ENCODE measurements at regions of chr4 and their contacts with region 1.

Region 1: DNA sequence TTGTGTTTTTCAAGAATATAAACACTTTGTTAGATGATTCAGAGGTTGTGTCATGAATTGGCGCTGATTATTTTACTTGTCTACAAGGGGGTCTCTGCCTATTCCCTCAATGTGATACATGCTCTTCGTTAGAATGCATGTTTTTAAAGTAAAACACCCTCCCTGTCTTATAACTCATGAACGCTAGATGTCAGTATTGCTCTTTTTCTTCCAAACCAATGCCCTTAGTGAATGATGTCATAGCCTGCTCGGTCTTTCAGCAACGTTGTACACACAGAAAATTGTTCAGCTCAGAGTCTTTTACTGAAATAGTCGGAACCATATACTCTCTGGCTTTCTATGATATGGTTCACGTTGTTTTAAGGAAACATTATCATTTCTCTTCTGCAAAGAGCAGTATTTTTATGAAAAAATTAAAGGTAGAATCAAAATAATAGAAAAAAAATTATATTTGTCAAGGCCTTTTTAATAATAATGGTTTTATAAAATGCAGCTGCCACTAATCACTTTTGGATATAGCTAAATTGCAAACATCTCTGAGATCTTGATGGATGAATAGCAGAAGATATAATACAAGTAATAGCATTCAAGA is 292.9 kb downstream of the TLL1 start:
- DNase-seq: peak; percentile 16
- H3K4me3 Mint-ChIP-seq: no peak overlapping the region
- H3K27ac Mint-ChIP-seq: no peak overlapping the region
- H3K4me1 Mint-ChIP-seq: no peaks in the 10 kb centered on the region
- H3K27me3 Mint-ChIP-seq: no peaks in the 10 kb centered on the region
- CTCF ChIP-seq: peak; percentile 16

Region 2: DNA sequence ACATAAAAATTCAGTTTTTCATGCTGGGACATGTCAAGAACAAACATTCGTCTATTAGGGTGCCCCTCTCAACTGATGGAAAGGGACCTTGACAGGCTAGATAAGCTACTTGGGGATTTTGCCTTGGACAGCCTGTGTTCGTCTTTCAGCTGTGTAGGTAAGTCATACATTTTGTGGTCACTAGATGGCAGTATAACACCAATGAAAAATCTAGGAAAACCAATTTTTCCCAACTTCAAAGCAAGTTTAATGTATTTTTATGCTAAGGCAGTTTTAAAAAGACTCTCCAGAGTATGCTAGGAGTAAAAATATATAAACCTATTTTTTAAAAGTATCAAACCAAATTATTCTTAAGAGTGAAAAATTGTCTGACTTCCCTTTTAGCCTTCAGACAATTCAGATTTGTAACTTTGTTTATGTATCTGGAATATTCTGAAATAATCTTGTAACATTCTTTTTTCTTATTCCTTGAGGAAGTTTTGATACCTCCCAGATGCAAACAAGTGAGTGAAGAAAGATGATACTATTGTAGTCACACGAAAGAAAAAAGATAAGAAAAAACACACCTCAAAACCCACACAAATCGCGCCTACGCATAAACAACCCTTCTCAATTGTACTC is 628.8 kb before region 1 on chr4:
- CTCF ChIA-PET with region 1: no interaction called
- intact Hi-C with region 1: loop called (anchors 10 kb)
- DNase-seq: peak; percentile 14
- H3K4me3 Mint-ChIP-seq: no peak overlapping the region
- H3K27ac Mint-ChIP-seq: no peak overlapping the region
- H3K4me1 Mint-ChIP-seq: no peaks in the 10 kb centered on the region
- H3K27me3 Mint-ChIP-seq: no peaks in the 10 kb centered on the region
- CTCF ChIP-seq: peak; percentile 42

Region 3: DNA sequence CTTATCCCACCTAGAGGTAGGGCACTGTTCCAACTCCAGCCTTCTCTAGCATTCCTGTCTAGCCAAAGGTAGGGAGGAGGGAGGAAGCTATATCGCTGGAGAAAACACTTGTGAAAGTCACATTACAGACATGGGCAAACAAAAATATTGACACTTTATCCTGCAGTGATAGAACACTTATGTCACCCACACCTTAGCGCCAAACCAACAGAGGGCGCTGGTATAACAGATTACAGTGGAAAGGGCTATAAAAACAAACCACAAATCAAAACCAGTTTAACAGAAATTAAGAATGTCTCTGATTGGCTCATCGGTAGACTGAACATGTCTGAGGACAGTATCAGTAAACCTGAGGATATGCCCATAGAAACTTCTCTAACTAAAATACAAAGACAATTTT is 158.4 kb after region 1 on chr4:
- CTCF ChIA-PET with region 1: no interaction called
- intact Hi-C with region 1: loop called (anchors 5 kb)
- DNase-seq: peak; percentile 50
- H3K4me3 Mint-ChIP-seq: no peak overlapping the region
- H3K27ac Mint-ChIP-seq: no peak overlapping the region
- H3K4me1 Mint-ChIP-seq: peaks cover 3% of the 10 kb centered on the region
- H3K27me3 Mint-ChIP-seq: no peaks in the 10 kb centered on the region
- CTCF ChIP-seq: peak; percentile 13

Region 4: GRCh38 chr4:167021545-167022155 is 855.7 kb after region 1 on chr4:
- CTCF ChIA-PET with region 1: no interaction called
- intact Hi-C with region 1: loop called (anchors 5 kb)
- DNase-seq: peak; percentile 61
- H3K4me3 Mint-ChIP-seq: no peak overlapping the region
- H3K27ac Mint-ChIP-seq: no peak overlapping the region
- H3K4me1 Mint-ChIP-seq: peaks cover 16% of the 10 kb centered on the region
- H3K27me3 Mint-ChIP-seq: no peaks in the 10 kb centered on the region
- CTCF ChIP-seq: no peak

Region 5: GRCh38 chr4:167622481-167623246 is 1456.7 kb after region 1 on chr4:
- CTCF ChIA-PET with region 1: no interaction called
- intact Hi-C with region 1: loop called (anchors 5 kb)
- DNase-seq: peak; percentile 67
- H3K4me3 Mint-ChIP-seq: no peak overlapping the region
- H3K27ac Mint-ChIP-seq: no peak overlapping the region
- H3K4me1 Mint-ChIP-seq: peaks cover 7% of the 10 kb centered on the region
- H3K27me3 Mint-ChIP-seq: no peaks in the 10 kb centered on the region
- CTCF ChIP-seq: peak; percentile 72

Measured in Calu3 (cell line).